ENCODE measurements at regions of chr17 and their contacts with region 1.

Region 1: GRCh38 chr17:79741751-79742588 is 11.2 kb downstream of the ENPP7 start:
- DNase-seq: peak; percentile 95
- H3K4me3 Mint-ChIP-seq: no peak overlapping the region
- H3K27ac Mint-ChIP-seq: no peak overlapping the region
- H3K4me1 Mint-ChIP-seq: peaks cover 10% of the 10 kb centered on the region
- H3K27me3 Mint-ChIP-seq: peaks cover 32% of the 10 kb centered on the region

Region 2: GRCh38 chr17:79991140-79991923 is 249.4 kb after region 1 on chr17:
- intact Hi-C with region 1: loop called (anchors 2 kb)
- DNase-seq: peak; percentile 94
- H3K4me3 Mint-ChIP-seq: peak overlapping the region; percentile 79
- H3K27ac Mint-ChIP-seq: no peak overlapping the region
- H3K4me1 Mint-ChIP-seq: peaks cover 23% of the 10 kb centered on the region
- H3K27me3 Mint-ChIP-seq: peaks cover 6% of the 10 kb centered on the region

Measured in activated CD4-positive, alpha-beta T cell treated with anti-CD3 and anti-CD28 coated beads, Interleukin-2, amount 10 ng/mL, durations not matched to agents 24 days and 14 days (primary cell).